ENCODE measurements at regions of chr9 and their contacts with region 1.

Region 1: GRCh38 chr9:5450359-5451091 is at the start of gene CD274:
- DNase-seq: peak; percentile 61 to 89 (median 80)
- ATAC-seq: peak; percentile 95
- H3K4me3 ChIP-seq: peak within 1 kb of the TSS; percentile 78
- H3K4me3 Mint-ChIP-seq: peak within 1 kb of the TSS; percentile 92 to 98 (median 95)
- H3K27ac ChIP-seq: peak within 1 kb of the TSS; percentile 94
- H3K27ac Mint-ChIP-seq: peak within 1 kb of the TSS; percentile 97 to 99 (median 98)
- H3K4me1 ChIP-seq: peaks cover 0 to 11% of the 10 kb centered on the region in 2 donors
- H3K4me1 Mint-ChIP-seq: peaks cover 33 to 69% (median 62%) of the 10 kb centered on the region in 7 donors
- H3K27me3 ChIP-seq: no peaks in the 10 kb centered on the region
- H3K27me3 Mint-ChIP-seq: no peaks in the 10 kb centered on the region
- total RNA-seq, gene CD274: 2.9 to 38.7 (median 7.8) TPM

Region 2: DNA sequence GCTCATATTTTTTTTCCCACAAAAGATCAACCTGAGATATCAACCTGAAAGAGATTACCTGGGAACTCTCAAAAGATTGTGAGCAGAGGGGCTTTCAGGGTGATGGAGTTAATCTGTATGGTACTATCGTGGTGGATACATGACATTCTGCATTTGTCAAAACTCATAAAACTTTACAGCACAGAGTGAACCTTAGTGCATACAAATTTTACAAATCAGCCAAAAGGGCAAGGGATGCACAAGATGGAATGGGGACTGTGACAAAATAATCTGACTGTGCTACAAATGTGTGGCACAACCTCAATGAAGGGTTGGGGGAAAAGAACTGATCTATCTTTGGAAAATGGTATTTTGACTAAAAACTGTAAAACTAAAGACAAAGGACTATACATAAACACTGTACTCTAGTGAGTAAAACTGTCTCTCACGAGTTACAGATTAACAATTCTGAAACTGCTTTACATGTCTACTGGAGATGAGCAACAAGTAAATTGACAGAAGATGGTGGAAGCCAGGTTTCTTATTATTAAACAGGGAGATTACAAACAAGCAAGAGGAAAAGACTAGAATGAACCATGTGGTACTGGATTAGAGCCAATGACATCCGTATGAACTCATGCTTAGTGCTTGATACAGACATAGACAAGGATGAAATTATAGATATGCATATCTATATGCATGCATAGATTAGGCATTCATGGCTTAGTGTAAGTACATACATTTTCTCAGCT is 86.1 kb before region 1 on chr9:
- CTCF ChIA-PET with region 1: no interaction called
- POLR2A ChIA-PET with region 1: no interaction called
- intact Hi-C with region 1: no loop called
- DNase-seq: no peak
- ATAC-seq: no peak
- H3K4me3 ChIP-seq: no peak overlapping the region
- H3K4me3 Mint-ChIP-seq: no peak overlapping the region
- H3K27ac ChIP-seq: no peak overlapping the region
- H3K27ac Mint-ChIP-seq: no peak overlapping the region
- H3K4me1 ChIP-seq: no peaks in the 10 kb centered on the region
- H3K4me1 Mint-ChIP-seq: peaks cover 5 to 26% (median 10%) of the 10 kb centered on the region in 7 donors
- H3K27me3 ChIP-seq: no peaks in the 10 kb centered on the region
- H3K27me3 Mint-ChIP-seq: no peaks in the 10 kb centered on the region

Region 3: GRCh38 chr9:5593904-5594303 is 143.4 kb after region 1 on chr9:
- CTCF ChIA-PET with region 1: interaction called, 83 read pairs
- POLR2A ChIA-PET with region 1: interaction called, 82 read pairs
- intact Hi-C with region 1: loop called (anchors 1 kb)
- DNase-seq: no peak
- ATAC-seq: no peak
- H3K4me3 ChIP-seq: no peak overlapping the region
- H3K4me3 Mint-ChIP-seq: no peak overlapping the region
- H3K27ac ChIP-seq: no peak overlapping the region
- H3K27ac Mint-ChIP-seq: peak overlapping the region in 2 of 9 donors; percentile 46 to 47
- H3K4me1 ChIP-seq: no peaks in the 10 kb centered on the region
- H3K4me1 Mint-ChIP-seq: peaks cover 4 to 28% (median 11%) of the 10 kb centered on the region in 7 donors
- H3K27me3 ChIP-seq: no peaks in the 10 kb centered on the region
- H3K27me3 Mint-ChIP-seq: peaks cover 0 to 7% (median 0%) of the 10 kb centered on the region in 5 donors

Region 4: DNA sequence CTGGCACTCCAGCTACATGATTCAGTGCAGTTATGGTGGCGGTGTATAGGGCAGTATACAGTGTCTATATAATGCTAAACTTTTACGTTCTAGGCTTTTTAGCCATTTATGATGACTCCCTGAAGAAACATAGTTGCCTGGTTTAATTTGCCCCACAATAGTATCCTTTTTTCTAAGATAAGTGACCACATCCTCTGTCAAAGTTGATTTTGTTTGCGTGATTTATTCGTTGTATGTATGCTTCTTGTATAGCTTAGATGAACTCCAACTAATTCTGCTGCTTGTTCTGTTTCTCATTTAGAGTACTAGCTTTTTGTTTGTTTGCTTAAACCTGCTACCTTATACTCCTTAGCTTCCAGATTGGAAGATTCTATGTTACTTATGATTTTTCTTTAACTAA is 298.8 kb after region 1 on chr9:
- CTCF ChIA-PET with region 1: no interaction called
- POLR2A ChIA-PET with region 1: no interaction called
- intact Hi-C with region 1: loop called in 1 of 2 experiments (anchors 10 kb)
- DNase-seq: no peak
- ATAC-seq: no peak
- H3K4me3 ChIP-seq: no peak overlapping the region
- H3K4me3 Mint-ChIP-seq: no peak overlapping the region
- H3K27ac ChIP-seq: no peak overlapping the region
- H3K27ac Mint-ChIP-seq: peak overlapping the region in 1 of 9 donors; percentile 14
- H3K4me1 ChIP-seq: no peaks in the 10 kb centered on the region
- H3K4me1 Mint-ChIP-seq: peaks cover 0 to 16% (median 0%) of the 10 kb centered on the region in 7 donors
- H3K27me3 ChIP-seq: no peaks in the 10 kb centered on the region
- H3K27me3 Mint-ChIP-seq: no peaks in the 10 kb centered on the region

Region 5: DNA sequence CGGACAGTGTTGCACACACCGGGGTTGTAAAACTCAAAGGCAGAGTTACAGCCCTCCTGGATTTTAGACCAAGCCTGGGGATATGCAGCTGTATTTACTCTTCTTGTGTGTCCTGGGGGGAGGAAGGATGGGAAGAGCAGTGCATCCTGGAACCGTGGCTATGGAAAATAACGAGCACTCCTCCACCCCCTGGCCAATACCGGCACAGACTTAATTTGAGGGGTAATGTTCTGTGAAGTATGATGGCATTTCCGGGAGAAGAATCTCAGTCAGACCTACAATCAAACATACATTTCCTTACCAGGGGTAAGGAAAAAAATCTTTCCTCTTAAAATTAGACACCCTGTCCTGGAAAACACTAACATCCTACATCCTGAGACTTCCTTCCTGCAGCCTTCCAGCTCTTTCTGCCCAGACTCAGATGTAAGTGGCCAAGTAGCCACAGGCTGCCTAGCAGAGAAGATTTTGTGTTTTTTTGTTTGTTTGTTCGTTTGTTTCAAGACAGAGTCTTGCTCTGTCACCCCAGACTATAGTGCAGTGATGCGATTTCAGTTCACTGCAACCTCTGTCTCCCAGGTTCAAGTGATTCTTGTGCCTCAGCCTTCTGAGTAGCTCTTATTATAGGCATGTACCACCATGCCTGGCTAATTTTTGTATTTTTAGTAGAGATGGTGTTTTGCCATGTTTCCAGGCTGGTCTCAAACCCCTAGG is 393.4 kb after region 1 on chr9:
- CTCF ChIA-PET with region 1: no interaction called
- POLR2A ChIA-PET with region 1: interaction called, 4 read pairs
- intact Hi-C with region 1: loop called in 1 of 2 experiments (anchors 5 kb)
- DNase-seq: peak in 2 of 9 donors; percentile 7 to 22
- ATAC-seq: peak; percentile 20
- H3K4me3 ChIP-seq: peak overlapping the region; percentile 5
- H3K4me3 Mint-ChIP-seq: peak overlapping the region; percentile 75 to 85 (median 80)
- H3K27ac ChIP-seq: peak overlapping the region; percentile 24
- H3K27ac Mint-ChIP-seq: peak overlapping the region; percentile 58 to 93 (median 91)
- H3K4me1 ChIP-seq: peaks cover 45 to 47% of the 10 kb centered on the region in 2 donors
- H3K4me1 Mint-ChIP-seq: peaks cover 50 to 83% (median 64%) of the 10 kb centered on the region in 7 donors
- H3K27me3 ChIP-seq: no peaks in the 10 kb centered on the region
- H3K27me3 Mint-ChIP-seq: no peaks in the 10 kb centered on the region

Region 6: DNA sequence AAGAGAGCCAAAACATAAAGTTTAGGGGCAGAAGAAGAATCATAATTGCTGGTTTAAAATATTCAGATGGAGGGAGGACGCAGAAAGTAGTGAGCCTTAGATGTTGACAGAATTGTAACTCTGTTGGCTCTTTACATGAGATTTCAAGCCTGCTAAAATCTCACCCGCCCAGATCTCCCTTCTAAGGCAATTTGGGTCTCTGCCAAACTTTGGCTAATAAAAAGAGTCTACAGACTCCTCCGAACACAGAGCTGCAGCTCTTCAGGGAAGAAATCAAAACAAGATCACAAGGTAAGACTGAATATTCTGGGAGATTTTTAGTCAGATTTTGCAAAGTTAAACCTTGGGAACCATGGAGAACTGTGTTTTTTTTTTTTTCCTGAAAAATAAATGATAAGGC is 765.0 kb after region 1 on chr9 and contains the start of gene IL33:
- CTCF ChIA-PET with region 1: no interaction called
- POLR2A ChIA-PET with region 1: no interaction called
- intact Hi-C with region 1: no loop called
- DNase-seq: no peak
- ATAC-seq: no peak
- H3K4me3 ChIP-seq: no peak within 1 kb of the TSS
- H3K4me3 Mint-ChIP-seq: no peak within 1 kb of the TSS
- H3K27ac ChIP-seq: no peak within 1 kb of the TSS
- H3K27ac Mint-ChIP-seq: no peak within 1 kb of the TSS
- H3K4me1 ChIP-seq: no peaks in the 10 kb centered on the region
- H3K4me1 Mint-ChIP-seq: no peaks in the 10 kb centered on the region
- H3K27me3 ChIP-seq: no peaks in the 10 kb centered on the region
- H3K27me3 Mint-ChIP-seq: peaks cover 17 to 50% (median 34%) of the 10 kb centered on the region in 5 donors
- total RNA-seq, gene IL33: not detected

Measured in naive thymus-derived CD4-positive, alpha-beta T cell (primary cell).